BJ (cell line): ENCODE measurements at regions of chr22 and their contacts with region 1.

Region 1: DNA sequence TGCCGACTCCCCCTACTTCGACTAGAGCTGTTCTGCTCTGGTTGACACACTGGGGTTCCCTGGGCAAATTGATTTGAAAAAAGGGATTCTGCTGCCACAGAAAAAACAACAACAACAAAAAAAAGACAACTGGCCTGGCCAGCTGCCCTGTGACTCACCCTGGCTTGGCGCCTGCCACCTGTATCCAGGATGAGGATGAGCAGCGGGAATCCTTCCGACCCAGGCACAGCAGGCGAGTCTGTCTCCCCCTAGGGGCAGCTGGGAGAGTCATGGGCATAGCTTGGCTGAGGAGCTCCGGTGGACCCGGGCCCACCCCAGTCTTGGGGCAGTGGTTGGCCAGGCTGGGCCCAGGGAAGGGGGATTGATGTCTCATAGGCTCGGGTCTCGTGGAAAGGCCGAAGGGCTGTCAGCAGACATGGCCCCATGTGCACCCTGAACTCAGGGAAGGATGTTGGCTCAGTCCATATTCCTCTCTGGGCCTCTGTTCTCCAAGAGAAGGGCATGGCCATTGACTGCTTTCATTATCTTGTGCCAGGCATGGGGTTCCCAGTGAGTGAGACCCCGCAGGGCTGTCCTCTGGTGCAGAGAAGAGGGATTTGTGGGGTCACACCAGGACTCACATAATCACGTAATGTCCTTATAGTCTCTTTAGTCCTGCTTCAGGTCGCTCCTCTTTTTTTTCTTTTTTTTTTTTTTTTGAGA is 10.4 kb upstream of the SUN2 start:
- DNase-seq: no peak
- H3K4me3 ChIP-seq: no peak overlapping the region
- H3K27me3 ChIP-seq: 0 out of 2 replicates have a peak, but pooled peaks cover 1% of the 10 kb centered on the region
- CTCF ChIP-seq: peak; percentile 96

Region 2: GRCh38 chr22:38777087-38777671 is 11.0 kb after region 1 on chr22:
- CTCF ChIA-PET with region 1: interaction called, 64 read pairs
- POLR2A ChIA-PET with region 1: no interaction called
- DNase-seq: no peak
- H3K4me3 ChIP-seq: no peak overlapping the region
- H3K27me3 ChIP-seq: no peaks in the 10 kb centered on the region
- CTCF ChIP-seq: no peak

Region 3: GRCh38 chr22:38843201-38843715 is 77.0 kb after region 1 on chr22:
- CTCF ChIA-PET with region 1: interaction called, 74 read pairs
- POLR2A ChIA-PET with region 1: no interaction called
- DNase-seq: no peak
- H3K4me3 ChIP-seq: peak overlapping the region; percentile 30
- H3K27me3 ChIP-seq: peaks cover 22% of the 10 kb centered on the region
- CTCF ChIP-seq: peak; percentile 26

Region 4: GRCh38 chr22:38862375-38863329 is 96.4 kb after region 1 on chr22:
- CTCF ChIA-PET with region 1: interaction called, 113 read pairs
- POLR2A ChIA-PET with region 1: no interaction called
- DNase-seq: no peak
- H3K4me3 ChIP-seq: no peak overlapping the region
- H3K27me3 ChIP-seq: 0 out of 2 replicates have a peak, but pooled peaks cover 2% of the 10 kb centered on the region
- CTCF ChIP-seq: no peak

Region 5: GRCh38 chr22:39013942-39014722 is 247.9 kb after region 1 on chr22 and contains the start of gene APOBEC3C:
- CTCF ChIA-PET with region 1: interaction called, 27 read pairs
- POLR2A ChIA-PET with region 1: no interaction called
- DNase-seq: peak; percentile 52
- H3K4me3 ChIP-seq: peak within 1 kb of the TSS; percentile 71
- H3K27me3 ChIP-seq: no peaks in the 10 kb centered on the region
- CTCF ChIP-seq: no peak
- polyA plus RNA-seq, gene APOBEC3C: 20.4 and 20.9 TPM in 2 replicates

Region 6: GRCh38 chr22:39123751-39124601 is 357.7 kb after region 1 on chr22:
- CTCF ChIA-PET with region 1: interaction called, 14 read pairs
- POLR2A ChIA-PET with region 1: no interaction called
- DNase-seq: no peak
- H3K4me3 ChIP-seq: no peak overlapping the region
- H3K27me3 ChIP-seq: 0 out of 2 replicates have a peak, but pooled peaks cover 2% of the 10 kb centered on the region
- CTCF ChIP-seq: no peak